Gastrocnemius medialis (tissue), 4 donors: ENCODE measurements at regions of chr5 and their contacts with region 1.

Region 1: DNA sequence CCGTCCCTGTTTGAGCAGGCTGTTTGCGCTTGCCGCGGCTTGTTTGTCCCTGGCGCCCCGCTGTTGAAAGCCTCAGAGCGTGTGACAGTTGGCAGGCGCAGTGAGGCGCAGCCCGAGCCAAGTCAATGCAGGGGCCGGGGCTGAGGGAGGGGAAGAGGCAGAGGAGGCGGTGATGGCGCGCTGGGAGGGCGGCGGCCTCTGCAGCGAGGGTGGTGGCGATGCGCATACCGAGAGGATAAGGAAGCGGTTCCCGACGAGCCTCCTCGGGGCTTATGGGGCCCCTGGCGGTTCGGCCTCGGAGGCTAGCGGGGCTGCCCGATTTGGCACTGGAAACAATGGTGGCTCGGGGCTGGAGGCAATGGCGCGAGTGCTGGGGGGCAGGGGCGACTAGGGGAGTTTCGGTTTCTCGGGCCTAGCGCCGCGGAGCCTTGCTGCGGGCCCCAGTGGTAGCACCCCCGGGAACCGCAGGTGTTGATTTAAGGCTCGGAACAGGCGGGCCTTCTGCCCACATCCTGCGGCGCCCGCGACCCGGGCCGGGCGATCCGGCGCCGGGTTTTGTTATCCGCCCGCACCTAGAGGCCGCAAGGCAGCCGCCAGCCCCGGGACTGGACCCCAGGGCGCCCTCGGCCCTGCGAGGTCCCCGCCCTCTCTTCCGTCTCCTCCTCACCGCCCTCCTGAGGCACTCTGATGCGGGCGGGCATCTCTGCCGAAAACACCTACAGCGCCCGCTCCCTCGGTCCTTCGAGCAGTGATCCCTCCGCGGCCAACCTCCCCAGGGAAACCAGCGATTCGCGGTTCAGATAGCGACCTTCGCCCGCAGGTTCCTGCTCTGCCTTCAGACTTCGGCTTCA is 947 bp upstream of the LNPEP start:
- DNase-seq: peak; percentile 85 to 93
- ATAC-seq: peak; percentile 65 to 67
- H3K4me3 ChIP-seq: peak overlapping the region; percentile 71 to 91 (median 89)
- H3K27ac ChIP-seq: peak overlapping the region; percentile 96 to 100 (median 98)
- H3K4me1 ChIP-seq: peaks cover 46 to 53% of the 10 kb centered on the region in 2 donors
- H3K27me3 ChIP-seq: no peaks in the 10 kb centered on the region
- CTCF ChIP-seq: peak in 4 of 5 experiments; percentile 3 to 41 (median 35)
- POLR2A ChIP-seq: peak; percentile 58 to 69

Region 2: DNA sequence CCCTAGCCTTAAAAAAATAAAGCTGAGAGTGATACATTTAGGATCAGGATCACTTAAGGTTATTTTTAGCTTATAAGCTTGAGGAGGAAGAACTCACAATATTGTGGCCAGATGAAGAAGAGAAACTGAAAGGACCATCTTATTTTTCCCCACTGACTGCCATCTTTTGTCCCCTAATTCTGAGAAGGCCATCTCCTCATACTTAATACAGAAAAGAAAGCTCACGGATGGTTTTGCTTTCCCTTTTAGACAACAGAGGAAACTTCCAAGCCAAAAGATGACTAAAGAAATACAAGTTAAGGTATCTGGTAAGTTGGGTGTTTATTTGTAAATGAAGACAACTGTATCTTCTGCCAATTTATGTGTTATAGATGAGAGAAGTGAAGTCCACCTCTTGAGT is 163.5 kb before region 1 on chr5:
- in situ Hi-C with region 1: no loop called
- intact Hi-C with region 1: no loop called
- DNase-seq: no peak
- ATAC-seq: no peak
- H3K4me3 ChIP-seq: no peak overlapping the region
- H3K27ac ChIP-seq: no peak overlapping the region
- H3K4me1 ChIP-seq: no peaks in the 10 kb centered on the region
- H3K27me3 ChIP-seq: no peaks in the 10 kb centered on the region
- CTCF ChIP-seq: no peak
- POLR2A ChIP-seq: no peak

Region 3: DNA sequence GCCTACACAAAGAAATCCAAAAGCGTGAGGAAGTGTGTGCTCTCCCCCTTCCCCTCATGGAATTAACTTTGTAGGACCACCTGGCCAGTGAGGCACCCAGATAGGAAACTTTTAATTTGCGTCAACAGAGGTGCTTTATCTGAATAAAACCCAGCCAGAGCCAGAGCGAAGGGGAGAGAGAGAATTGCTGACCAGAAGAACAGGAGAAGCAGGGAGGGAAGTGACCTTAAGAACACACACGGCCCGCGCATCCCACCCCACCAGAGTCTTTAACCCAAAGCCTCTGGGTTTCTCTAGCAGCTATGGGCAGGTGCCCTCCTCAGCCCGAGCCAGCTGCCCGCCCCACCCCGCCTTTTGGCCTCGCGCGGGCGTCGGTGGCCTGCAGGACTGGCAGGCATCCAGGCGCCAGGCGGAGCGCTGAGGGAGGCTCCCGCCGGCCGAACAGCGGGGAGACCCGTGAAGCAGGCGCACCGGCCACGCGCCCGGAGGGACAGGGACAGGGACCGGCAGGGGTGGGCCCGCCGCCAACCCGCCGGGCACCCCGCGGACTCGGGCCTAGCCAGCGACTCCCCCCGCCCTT is 127.8 kb before region 1 on chr5:
- in situ Hi-C with region 1: no loop called
- intact Hi-C with region 1: loop called (anchors 1 kb)
- DNase-seq: peak; percentile 78 to 88
- ATAC-seq: peak; percentile 60 to 64
- H3K4me3 ChIP-seq: peak overlapping the region; percentile 95 to 98 (median 97)
- H3K27ac ChIP-seq: peak overlapping the region; percentile 99 to 100 (median 100)
- H3K4me1 ChIP-seq: peaks cover 11 to 22% of the 10 kb centered on the region in 2 donors
- H3K27me3 ChIP-seq: no peaks in the 10 kb centered on the region
- CTCF ChIP-seq: no peak
- POLR2A ChIP-seq: peak; percentile 71 to 73

Region 4: GRCh38 chr5:96868603-96869371 is 66.1 kb before region 1 on chr5:
- in situ Hi-C with region 1: loop called in 1 of 4 experiments (anchors 10 kb)
- intact Hi-C with region 1: loop called (anchors 1 kb)
- DNase-seq: no peak
- ATAC-seq: peak; percentile 96 to 99
- H3K4me3 ChIP-seq: no peak overlapping the region
- H3K27ac ChIP-seq: no peak overlapping the region
- H3K4me1 ChIP-seq: peaks cover 0 to 6% of the 10 kb centered on the region in 2 donors
- H3K27me3 ChIP-seq: no peaks in the 10 kb centered on the region
- CTCF ChIP-seq: peak; percentile 77 to 98 (median 90)
- POLR2A ChIP-seq: no peak

Region 5: GRCh38 chr5:96885518-96886338 is 49.2 kb before region 1 on chr5:
- in situ Hi-C with region 1: no loop called
- intact Hi-C with region 1: loop called (anchors 2 kb)
- DNase-seq: peak; percentile 69 to 70
- ATAC-seq: peak; percentile 99
- H3K4me3 ChIP-seq: no peak overlapping the region
- H3K27ac ChIP-seq: peak overlapping the region; percentile 72 to 76 (median 74)
- H3K4me1 ChIP-seq: peaks cover 13 to 15% of the 10 kb centered on the region in 2 donors
- H3K27me3 ChIP-seq: no peaks in the 10 kb centered on the region
- CTCF ChIP-seq: no peak
- POLR2A ChIP-seq: no peak

Region 6: GRCh38 chr5:96986450-96986849 is 51.5 kb after region 1 on chr5:
- in situ Hi-C with region 1: no loop called
- intact Hi-C with region 1: no loop called
- DNase-seq: no peak
- ATAC-seq: peak in 1 of 2 donors; percentile 56
- H3K4me3 ChIP-seq: no peak overlapping the region
- H3K27ac ChIP-seq: no peak overlapping the region
- H3K4me1 ChIP-seq: peaks cover 0 to 6% of the 10 kb centered on the region in 2 donors
- H3K27me3 ChIP-seq: no peaks in the 10 kb centered on the region
- CTCF ChIP-seq: no peak
- POLR2A ChIP-seq: no peak

Region 7: GRCh38 chr5:98928873-98929696 is 1994.2 kb after region 1 on chr5 and contains the start of gene CHD1:
- in situ Hi-C with region 1: no loop called
- intact Hi-C with region 1: loop called (anchors 1 kb)
- DNase-seq: peak; percentile 98 to 99
- ATAC-seq: peak; percentile 83 to 85
- H3K4me3 ChIP-seq: peak within 1 kb of the TSS; percentile 77 to 93 (median 84)
- H3K27ac ChIP-seq: peak within 1 kb of the TSS; percentile 99 to 100 (median 99)
- H3K4me1 ChIP-seq: peaks cover 53 to 57% of the 10 kb centered on the region in 2 donors
- H3K27me3 ChIP-seq: no peaks in the 10 kb centered on the region
- CTCF ChIP-seq: peak in 1 of 5 experiments; percentile 7
- POLR2A ChIP-seq: peak; percentile 97 to 98
- total RNA-seq, gene CHD1: 25.0 to 44.3 (median 33.8) TPM